MCF 10A (cell line): ENCODE measurements at regions of chr5 and their contacts with region 1.

Region 1: DNA sequence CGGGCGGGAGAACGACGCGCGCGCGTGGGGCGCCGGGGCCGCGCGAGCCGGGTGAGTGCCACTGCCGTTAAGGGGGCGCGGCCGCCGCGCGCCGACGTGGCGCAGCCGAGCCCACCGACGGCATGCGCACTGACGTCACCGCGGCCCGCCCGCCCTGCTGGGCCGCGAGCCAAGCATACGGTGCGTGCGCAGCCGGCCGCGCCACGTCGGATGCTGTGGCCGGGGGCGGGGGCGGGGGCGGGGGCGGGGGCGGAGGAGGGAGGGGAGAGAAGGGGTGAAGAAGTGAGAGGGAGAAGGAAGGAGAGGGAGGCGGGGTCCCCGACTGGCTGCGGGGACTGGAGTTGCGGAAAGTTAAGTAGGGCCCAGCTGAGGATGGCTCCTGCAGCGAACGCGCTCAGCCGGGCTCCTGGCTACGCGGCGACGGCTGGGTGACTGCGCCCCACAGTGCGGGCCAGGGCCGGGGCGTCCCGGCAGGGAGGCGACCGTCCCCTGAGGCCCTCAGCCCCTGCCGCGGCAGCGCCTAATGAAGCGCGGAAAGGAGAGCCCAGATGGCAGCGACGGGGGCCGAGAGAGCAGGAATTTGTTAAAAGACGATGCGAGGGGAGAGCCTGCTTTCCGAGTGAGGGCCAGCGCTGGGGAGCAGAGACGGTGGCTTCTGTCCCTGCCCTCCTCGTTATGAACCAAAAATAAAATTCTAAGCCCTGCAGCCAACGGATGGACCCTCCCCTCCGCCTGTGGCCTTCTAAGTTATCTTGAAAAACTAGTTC is at the start of gene DAP:
- DNase-seq: peak; percentile 76
- H3K4me3 Mint-ChIP-seq: peak within 1 kb of the TSS; percentile 81
- H3K27ac Mint-ChIP-seq: peak within 1 kb of the TSS; percentile 76
- H3K4me1 Mint-ChIP-seq: peaks cover 5% of the 10 kb centered on the region
- H3K27me3 Mint-ChIP-seq: no peaks in the 10 kb centered on the region
- CTCF ChIP-seq: no peak
- total RNA-seq, gene DAP: 114 and 123 TPM in 2 replicates

Region 2: GRCh38 chr5:10564838-10565784 is 196.2 kb before region 1 on chr5:
- CTCF ChIA-PET with region 1: no interaction called
- POLR2A ChIA-PET with region 1: no interaction called
- intact Hi-C with region 1: no loop called
- DNase-seq: no peak
- H3K4me3 Mint-ChIP-seq: peak overlapping the region; percentile 66
- H3K27ac Mint-ChIP-seq: no peak overlapping the region
- H3K4me1 Mint-ChIP-seq: peaks cover 13% of the 10 kb centered on the region
- H3K27me3 Mint-ChIP-seq: no peaks in the 10 kb centered on the region
- CTCF ChIP-seq: no peak

Region 3: GRCh38 chr5:10689391-10690081 is 71.8 kb before region 1 on chr5:
- CTCF ChIA-PET with region 1: no interaction called
- POLR2A ChIA-PET with region 1: no interaction called
- intact Hi-C with region 1: no loop called
- DNase-seq: peak; percentile 57
- H3K4me3 Mint-ChIP-seq: no peak overlapping the region
- H3K27ac Mint-ChIP-seq: no peak overlapping the region
- H3K4me1 Mint-ChIP-seq: peaks cover 5% of the 10 kb centered on the region
- H3K27me3 Mint-ChIP-seq: no peaks in the 10 kb centered on the region
- CTCF ChIP-seq: peak; percentile 27

Region 4: DNA sequence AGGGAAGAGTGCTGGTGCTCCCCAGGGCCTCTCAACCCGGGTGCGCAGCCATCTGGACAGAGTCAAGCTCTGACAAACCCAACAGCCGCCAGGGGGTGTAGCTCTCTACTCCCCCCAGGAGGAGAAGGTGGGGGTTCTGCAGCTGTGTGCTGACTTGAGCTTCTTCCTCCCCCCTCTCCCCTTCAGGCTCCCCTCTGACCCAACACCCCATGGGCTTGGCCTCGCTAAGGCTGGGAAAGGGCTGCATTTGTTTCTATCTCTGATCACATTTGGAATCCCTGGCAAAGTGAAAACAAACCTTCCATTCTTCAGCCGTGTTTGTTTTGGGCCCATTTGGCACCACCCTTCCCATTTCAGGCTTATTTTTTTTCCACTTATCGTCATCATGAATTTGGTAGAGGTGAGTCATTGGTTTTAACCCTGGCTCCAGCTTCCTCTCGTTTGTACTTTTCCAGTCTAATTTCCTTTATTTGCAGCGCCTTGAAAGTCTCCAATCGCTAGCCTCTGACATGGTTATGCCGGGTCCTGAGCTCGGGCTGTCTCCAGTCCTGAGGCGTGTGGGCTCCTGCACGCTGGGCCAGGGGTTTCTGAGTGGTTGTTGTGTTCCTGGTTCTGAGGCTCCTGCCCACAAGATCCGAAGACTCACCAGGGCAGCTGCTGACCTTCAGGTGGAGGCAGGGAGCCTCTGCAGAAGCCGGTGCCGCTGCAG is 36.4 kb before region 1 on chr5:
- CTCF ChIA-PET with region 1: interaction called, 3 read pairs
- POLR2A ChIA-PET with region 1: interaction called, 5 read pairs
- intact Hi-C with region 1: loop called (anchors 2 kb)
- DNase-seq: peak; percentile 82
- H3K4me3 Mint-ChIP-seq: peak overlapping the region; percentile 65
- H3K27ac Mint-ChIP-seq: peak overlapping the region; percentile 88
- H3K4me1 Mint-ChIP-seq: peaks cover 39% of the 10 kb centered on the region
- H3K27me3 Mint-ChIP-seq: no peaks in the 10 kb centered on the region
- CTCF ChIP-seq: peak; percentile 35